ENCODE measurements at regions of chr3 and their contacts with region 1.

Region 1: DNA sequence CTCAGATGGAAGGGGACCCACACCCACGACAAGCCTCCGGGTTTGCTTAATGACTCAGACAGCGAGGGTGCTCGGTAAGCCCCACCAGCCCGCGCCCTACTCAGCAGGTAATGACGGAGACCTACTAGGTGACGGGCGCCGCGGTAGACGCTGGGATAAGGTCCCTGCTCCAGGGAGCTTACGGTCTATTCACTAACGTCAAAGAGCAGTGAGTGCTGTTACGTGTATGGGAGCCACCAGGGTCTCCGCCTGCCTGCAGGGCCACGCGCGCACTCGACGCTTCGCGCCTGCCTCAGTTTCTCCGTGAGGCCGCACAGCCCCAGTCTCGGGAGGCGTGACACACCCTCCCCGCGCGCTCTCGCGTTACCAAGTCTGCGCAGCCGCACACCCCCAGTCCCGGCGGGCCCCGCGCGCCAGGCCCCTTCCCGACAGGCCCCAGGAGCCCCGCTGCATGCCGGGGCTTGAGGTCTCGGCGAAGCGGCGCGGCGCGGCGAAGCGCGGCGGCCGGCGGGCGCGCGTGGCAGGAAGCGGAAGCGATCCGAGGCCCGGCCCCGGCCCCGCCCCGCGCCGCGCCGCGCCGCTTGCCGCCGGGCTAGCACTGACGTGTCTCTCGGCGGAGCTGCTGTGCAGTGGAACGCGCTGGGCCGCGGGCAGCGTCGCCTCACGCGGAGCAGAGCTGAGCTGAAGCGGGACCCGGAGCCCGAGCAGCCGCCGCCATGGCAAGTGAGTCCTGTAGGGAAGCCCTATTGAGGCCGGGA is at the start of gene SEC61A1:
- DNase-seq: peak; percentile 92 to 95 (median 94)
- ATAC-seq: peak; percentile 95
- H3K4me3 ChIP-seq: peak within 1 kb of the TSS; percentile 94
- H3K27ac ChIP-seq: peak within 1 kb of the TSS; percentile 92
- H3K4me1 ChIP-seq: peaks cover 0 to 22% of the 10 kb centered on the region in 2 experiments; a peak in 2 of 5 replicates
- H3K27me3 ChIP-seq: peaks cover under 1 to 1% of the 10 kb centered on the region in 2 experiments; a peak in 4 of 5 replicates
- CTCF ChIP-seq: no peak
- EP300 ChIP-seq: no peak
- POLR2A ChIP-seq: peak; percentile 82
- RAD21 ChIP-seq: no peak
- polyA plus RNA-seq, gene SEC61A1: 1.9 to 5.1 TPM

Region 2: GRCh38 chr3:128011140-128011539 is 40.9 kb before region 1 on chr3:
- CTCF ChIA-PET with region 1: no interaction called
- POLR2A ChIA-PET with region 1: interaction called, 4 read pairs
- in situ Hi-C with region 1: no loop called
- intact Hi-C with region 1: loop called (anchors 2 kb)
- DNase-seq: peak; percentile 42 to 63 (median 52)
- ATAC-seq: peak; percentile 89
- H3K4me3 ChIP-seq: no peak overlapping the region
- H3K27ac ChIP-seq: no peak overlapping the region
- H3K4me1 ChIP-seq: peaks cover 5 to 16% of the 10 kb centered on the region in 2 experiments; a peak in 4 of 5 replicates
- H3K27me3 ChIP-seq: peaks cover 0 to 12% of the 10 kb centered on the region in 2 experiments; a peak in 2 of 5 replicates
- CTCF ChIP-seq: peak; percentile 49 to 65 (median 56)
- EP300 ChIP-seq: no peak
- POLR2A ChIP-seq: no peak
- RAD21 ChIP-seq: peak in 1 of 2 experiments; percentile 49; a peak in 3 of 4 replicates

Region 3: GRCh38 chr3:128066114-128066513 is 14.1 kb after region 1 on chr3:
- CTCF ChIA-PET with region 1: no interaction called
- POLR2A ChIA-PET with region 1: interaction called, 25 read pairs
- in situ Hi-C with region 1: no loop called
- intact Hi-C with region 1: no loop called
- DNase-seq: no peak
- ATAC-seq: no peak
- H3K4me3 ChIP-seq: no peak overlapping the region
- H3K27ac ChIP-seq: no peak overlapping the region
- H3K4me1 ChIP-seq: peaks cover 0 to 3% of the 10 kb centered on the region in 2 experiments; a peak in 2 of 5 replicates
- H3K27me3 ChIP-seq: no peaks in the 10 kb centered on the region
- CTCF ChIP-seq: no peak
- EP300 ChIP-seq: no peak
- POLR2A ChIP-seq: no peak
- RAD21 ChIP-seq: no peak

Measured in K562 (cell line).